ENCODE measurements at regions of chr6 and their contacts with region 1.

Region 1: DNA sequence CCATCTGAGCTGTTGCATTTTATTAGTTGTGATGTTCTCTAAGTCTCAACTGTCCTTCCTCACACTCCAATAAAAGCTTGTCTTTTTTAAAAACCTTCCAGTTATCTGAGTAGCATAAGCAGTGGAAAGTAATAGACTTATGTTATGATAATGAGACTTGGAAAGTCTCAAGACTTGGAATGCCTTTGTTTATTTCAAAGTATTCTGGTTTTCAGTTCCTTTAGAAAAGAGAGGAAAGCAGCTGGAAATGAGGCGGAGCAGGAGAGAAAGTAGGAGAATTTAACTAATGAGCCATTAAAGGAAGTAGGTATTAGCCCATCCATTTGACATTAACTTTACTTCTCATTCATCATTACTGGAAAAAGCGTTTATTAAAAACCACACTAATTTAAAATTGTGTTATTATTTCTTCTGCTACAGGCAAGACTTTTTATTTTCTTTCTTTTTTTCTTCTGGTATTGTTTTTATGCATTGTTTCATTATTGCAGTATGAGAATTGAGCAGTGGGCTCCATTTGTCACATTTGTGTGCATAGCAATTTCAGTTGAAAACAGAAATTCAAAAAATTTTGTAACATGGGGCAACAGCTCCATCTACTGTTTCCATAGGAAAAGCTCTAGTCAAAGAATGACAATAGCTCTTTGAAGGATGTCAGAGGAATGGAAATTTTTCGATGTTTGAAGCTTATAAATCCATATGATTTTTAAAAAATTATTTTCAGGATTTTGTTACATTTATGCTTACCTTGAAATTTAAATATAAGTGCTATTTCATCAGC is 194.8 kb downstream of the COL9A1 start:
- DNase-seq: no peak
- H3K4me3 Mint-ChIP-seq: no peak overlapping the region
- H3K27ac Mint-ChIP-seq: no peak overlapping the region
- H3K4me1 Mint-ChIP-seq: no peaks in the 10 kb centered on the region
- H3K27me3 Mint-ChIP-seq: peaks cover 14% of the 10 kb centered on the region

Region 2: DNA sequence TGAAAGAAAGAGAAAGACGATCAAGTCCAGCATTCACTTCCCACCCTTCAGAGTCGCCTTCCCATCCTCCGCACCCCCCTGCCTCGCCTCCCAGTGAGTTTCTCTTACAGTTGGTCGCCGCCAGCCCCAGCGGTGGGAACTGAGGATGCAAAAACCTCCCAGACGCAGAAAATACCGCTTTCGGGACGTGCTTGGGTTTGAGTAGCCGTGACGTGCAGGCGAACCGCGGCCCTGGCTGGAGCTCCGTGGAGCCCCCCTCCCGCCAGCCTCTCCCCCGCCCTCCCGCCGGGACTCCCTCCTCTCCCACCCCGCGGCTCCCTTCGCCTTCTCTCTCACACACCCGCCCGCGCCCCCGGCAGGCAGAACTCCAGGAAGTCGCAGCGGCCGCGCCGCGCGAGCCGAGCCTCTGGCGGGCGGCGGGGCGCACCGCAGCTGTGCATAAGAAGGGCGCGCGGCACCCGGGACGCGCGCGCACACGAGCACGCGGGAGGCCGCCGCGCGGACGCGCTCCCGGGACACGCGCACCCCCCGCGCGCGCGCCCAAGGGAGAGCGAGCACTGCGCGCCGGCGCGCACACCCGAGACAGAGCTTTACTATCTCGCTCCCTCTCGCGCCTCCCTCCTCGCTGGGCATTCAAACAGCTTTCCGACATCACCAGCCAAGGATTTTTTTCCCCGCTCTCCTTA is 1473.2 kb before region 1 on chr6 and contains the start of gene ADGRB3:
- CTCF ChIA-PET with region 1: interaction called, 3 read pairs
- intact Hi-C with region 1: loop called (anchors 5 kb)
- DNase-seq: peak; percentile 25
- H3K4me3 Mint-ChIP-seq: peak within 1 kb of the TSS; percentile 77
- H3K27ac Mint-ChIP-seq: no peak within 1 kb of the TSS
- H3K4me1 Mint-ChIP-seq: peaks cover 18% of the 10 kb centered on the region
- H3K27me3 Mint-ChIP-seq: peaks cover 52% of the 10 kb centered on the region
- total RNA-seq, gene ADGRB3: not detected

Region 3: DNA sequence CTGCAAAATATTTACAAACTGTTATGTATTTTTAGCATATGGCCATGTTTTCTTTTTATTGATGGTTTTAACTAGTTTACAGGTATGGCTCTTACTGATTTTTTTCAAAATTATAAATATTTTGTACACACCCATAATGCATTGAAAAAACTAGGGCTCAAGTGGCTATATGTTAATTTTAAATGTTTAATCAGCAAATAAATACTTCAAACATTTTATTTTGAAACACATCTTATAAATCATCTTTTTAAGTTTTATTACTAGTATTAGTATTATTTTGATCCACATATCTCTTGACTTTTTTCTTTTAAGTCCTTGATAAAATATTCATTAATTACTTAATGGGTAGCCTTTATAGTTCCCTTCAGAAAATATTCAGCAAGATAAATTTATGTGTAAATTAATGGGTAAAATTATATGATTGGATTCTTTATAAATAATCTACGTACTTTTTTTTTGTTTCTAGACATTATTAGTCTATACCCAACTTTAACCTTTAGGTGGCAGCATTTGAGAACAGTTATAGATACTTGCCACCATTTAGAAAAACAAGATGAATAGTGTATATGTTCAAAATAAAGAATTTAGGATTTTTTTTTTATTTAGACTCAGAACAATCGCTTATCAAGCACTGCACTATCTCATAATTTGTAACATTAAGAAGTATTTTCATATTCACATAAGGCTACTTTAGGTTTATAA is 1231.1 kb before region 1 on chr6:
- CTCF ChIA-PET with region 1: no interaction called
- intact Hi-C with region 1: loop called (anchors 5 kb)
- DNase-seq: no peak
- H3K4me3 Mint-ChIP-seq: no peak overlapping the region
- H3K27ac Mint-ChIP-seq: no peak overlapping the region
- H3K4me1 Mint-ChIP-seq: no peaks in the 10 kb centered on the region
- H3K27me3 Mint-ChIP-seq: no peaks in the 10 kb centered on the region

Region 4: GRCh38 chr6:68967549-68968300 is 1140.3 kb before region 1 on chr6:
- CTCF ChIA-PET with region 1: interaction called, 4 read pairs
- intact Hi-C with region 1: loop called (anchors 10 kb)
- DNase-seq: peak; percentile 68
- H3K4me3 Mint-ChIP-seq: no peak overlapping the region
- H3K27ac Mint-ChIP-seq: no peak overlapping the region
- H3K4me1 Mint-ChIP-seq: peaks cover 7% of the 10 kb centered on the region
- H3K27me3 Mint-ChIP-seq: peaks cover 2% of the 10 kb centered on the region

Region 5: GRCh38 chr6:69835414-69836179 is 272.4 kb before region 1 on chr6:
- CTCF ChIA-PET with region 1: interaction called, 3 read pairs
- intact Hi-C with region 1: loop called (anchors 1 kb)
- DNase-seq: no peak
- H3K4me3 Mint-ChIP-seq: no peak overlapping the region
- H3K27ac Mint-ChIP-seq: no peak overlapping the region
- H3K4me1 Mint-ChIP-seq: peaks cover 3% of the 10 kb centered on the region
- H3K27me3 Mint-ChIP-seq: peaks cover 5% of the 10 kb centered on the region

Region 6: GRCh38 chr6:70028926-70029325 is 79.1 kb before region 1 on chr6:
- CTCF ChIA-PET with region 1: no interaction called
- intact Hi-C with region 1: no loop called
- DNase-seq: no peak
- H3K4me3 Mint-ChIP-seq: no peak overlapping the region
- H3K27ac Mint-ChIP-seq: no peak overlapping the region
- H3K4me1 Mint-ChIP-seq: no peaks in the 10 kb centered on the region
- H3K27me3 Mint-ChIP-seq: peaks cover 2% of the 10 kb centered on the region

Region 7: GRCh38 chr6:70119218-70119835 is 11.3 kb after region 1 on chr6:
- CTCF ChIA-PET with region 1: interaction called, 13 read pairs
- intact Hi-C with region 1: no loop called
- DNase-seq: no peak
- H3K4me3 Mint-ChIP-seq: no peak overlapping the region
- H3K27ac Mint-ChIP-seq: no peak overlapping the region
- H3K4me1 Mint-ChIP-seq: no peaks in the 10 kb centered on the region
- H3K27me3 Mint-ChIP-seq: peaks cover 10% of the 10 kb centered on the region

Region 8: DNA sequence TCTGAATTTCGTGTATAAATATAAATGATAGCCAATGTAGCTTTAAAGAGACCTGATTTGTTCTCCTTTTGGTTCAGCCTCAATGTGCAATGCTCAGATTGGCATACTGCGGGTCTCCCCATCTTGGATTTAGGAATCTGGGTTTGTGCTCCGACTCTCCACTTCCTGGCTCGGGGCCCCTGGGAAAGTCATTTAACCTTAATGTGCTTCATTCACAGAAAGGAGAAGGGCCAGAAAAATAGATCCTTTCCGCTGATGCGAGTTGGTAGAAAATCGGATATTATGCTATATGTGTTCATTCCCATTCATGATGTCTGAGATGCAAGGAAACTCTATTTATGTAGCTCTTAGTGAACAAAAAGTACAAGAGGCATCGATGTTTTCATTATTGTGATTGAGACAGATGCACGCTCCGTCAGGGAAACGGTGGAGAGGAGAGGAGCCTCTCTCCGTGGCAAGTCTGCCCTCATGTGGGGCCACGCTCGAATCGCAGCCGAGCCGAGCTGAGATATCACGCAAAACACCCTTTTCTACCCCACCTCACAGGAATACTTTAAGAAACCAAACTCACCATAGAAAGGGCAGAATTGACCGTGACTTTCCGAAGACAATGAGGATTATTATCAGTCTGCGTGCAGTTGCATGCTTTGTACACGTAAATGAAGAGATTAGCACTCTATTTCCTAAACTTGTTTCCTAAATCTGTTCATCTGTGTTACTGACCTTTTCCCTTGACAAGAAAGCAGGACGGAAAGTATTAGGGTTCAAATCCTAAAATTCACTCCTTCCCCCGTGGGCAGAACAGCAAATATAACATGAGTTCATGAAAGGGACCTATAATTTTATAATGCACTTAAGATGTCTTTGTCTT is 58.3 kb after region 1 on chr6:
- CTCF ChIA-PET with region 1: no interaction called
- intact Hi-C with region 1: loop called (anchors 2 kb)
- DNase-seq: peak; percentile 56
- H3K4me3 Mint-ChIP-seq: no peak overlapping the region
- H3K27ac Mint-ChIP-seq: no peak overlapping the region
- H3K4me1 Mint-ChIP-seq: no peaks in the 10 kb centered on the region
- H3K27me3 Mint-ChIP-seq: peaks cover 29% of the 10 kb centered on the region

Measured in activated naive CD4-positive, alpha-beta T cell treated with anti-CD3 and anti-CD28 coated beads for 36 hours (primary cell).